ENCODE measurements at regions of chr20 and their contacts with region 1.

Region 1: GRCh38 chr20:19583532-19584175 is 174.4 kb upstream of the RIN2 start:
- DNase-seq: peak; percentile 85

Region 2: GRCh38 chr20:19205977-19206396 is 377.7 kb before region 1 on chr20:
- intact Hi-C with region 1: loop called (anchors 2 kb)
- DNase-seq: peak; percentile 83